AG04450 (cell line): ENCODE measurements at regions of chr9 and their contacts with region 1.

Region 1: DNA sequence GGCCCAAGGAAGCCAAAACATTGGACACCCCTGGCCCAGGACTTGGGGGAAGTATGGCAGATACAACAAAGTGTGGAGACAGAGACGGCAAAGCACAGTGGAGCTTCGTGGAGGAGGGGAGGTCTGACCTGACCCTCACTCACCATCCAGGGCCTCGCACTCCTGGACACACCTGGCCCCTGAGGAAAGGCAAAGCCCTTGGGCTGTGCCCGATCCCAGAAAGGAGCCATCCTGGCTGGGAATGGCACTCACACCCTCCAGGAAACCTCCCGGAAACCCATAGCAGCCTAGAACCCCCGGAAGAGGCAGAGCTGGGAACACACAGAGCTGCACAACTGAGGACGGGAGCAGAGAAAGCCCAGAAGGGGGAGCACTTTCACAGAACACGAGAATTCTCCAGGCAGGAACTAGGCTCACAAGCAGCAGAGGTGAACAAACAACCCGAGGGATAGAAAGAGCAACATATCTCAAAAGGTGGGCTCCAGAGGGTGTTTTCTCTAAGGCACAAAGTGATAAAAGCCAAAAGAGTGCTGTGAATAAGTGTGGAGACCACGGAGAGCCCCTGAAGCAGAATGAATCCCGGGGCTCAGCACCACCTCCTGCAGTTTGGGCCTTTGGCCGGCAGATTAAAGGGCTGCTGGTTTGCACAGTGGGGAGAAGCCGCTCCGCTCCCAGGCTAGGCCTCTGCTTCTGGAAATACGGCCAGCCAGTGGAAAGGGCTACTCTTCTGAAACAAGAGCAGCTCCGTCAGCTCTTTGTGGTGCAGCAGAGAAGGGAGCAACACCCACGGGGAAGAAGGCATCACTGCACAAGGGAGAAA is 108.2 kb downstream of the UBE2R2 start:
- DNase-seq: peak; percentile 16
- H3K4me3 ChIP-seq: no peak overlapping the region
- H3K27ac ChIP-seq: no peak overlapping the region
- H3K27me3 ChIP-seq: no peaks in the 10 kb centered on the region
- CTCF ChIP-seq: peak; percentile 75

Region 2: DNA sequence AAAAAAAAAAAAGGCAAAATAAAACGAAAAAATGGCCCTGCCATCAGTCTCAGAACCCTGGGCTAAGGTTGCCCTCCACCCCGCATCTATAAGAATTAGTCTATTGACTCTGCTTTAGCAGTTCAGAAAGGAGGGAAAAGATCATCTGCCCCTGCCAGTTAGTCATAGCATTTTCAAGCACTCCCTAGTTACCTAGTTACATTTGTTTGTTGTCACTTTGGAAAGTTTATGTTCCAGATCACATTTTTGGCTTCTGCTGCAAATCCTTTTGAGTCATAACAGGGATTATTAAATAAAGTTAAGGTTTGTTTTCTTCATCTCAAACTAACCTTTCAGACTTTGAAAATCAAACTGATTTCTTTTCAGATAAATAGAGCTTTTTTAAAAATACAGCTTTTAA is 574.9 kb before region 1 on chr9:
- CTCF ChIA-PET with region 1: no interaction called
- POLR2A ChIA-PET with region 1: no interaction called
- DNase-seq: peak; percentile 80
- H3K4me3 ChIP-seq: no peak overlapping the region
- H3K27ac ChIP-seq: peak overlapping the region; percentile 84
- H3K27me3 ChIP-seq: no peaks in the 10 kb centered on the region
- CTCF ChIP-seq: no peak

Region 3: GRCh38 chr9:33942471-33943083 is 17.4 kb after region 1 on chr9:
- CTCF ChIA-PET with region 1: interaction called, 19 read pairs
- POLR2A ChIA-PET with region 1: no interaction called
- DNase-seq: peak; percentile 72
- H3K4me3 ChIP-seq: no peak overlapping the region
- H3K27ac ChIP-seq: no peak overlapping the region
- H3K27me3 ChIP-seq: no peaks in the 10 kb centered on the region
- CTCF ChIP-seq: peak; percentile 76

Region 4: DNA sequence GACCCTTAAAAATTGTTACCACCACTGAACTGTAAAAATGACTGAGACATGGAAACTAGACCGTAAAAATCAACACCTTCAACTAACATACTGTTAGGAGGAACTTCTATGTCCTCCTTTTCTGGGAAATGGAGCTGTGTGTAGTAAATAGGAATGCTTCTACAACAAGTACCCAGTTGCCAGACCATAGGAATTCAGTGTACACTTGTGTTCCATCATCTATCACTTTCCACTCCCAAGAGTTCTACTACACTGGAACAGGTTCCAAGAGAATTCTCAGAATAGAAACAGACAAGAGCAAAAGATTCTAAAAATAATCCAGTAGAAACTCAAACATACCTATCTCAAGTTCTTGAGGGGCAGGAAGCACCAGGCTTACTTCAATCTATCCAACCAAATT is 99.9 kb after region 1 on chr9:
- CTCF ChIA-PET with region 1: interaction called, 15 read pairs
- POLR2A ChIA-PET with region 1: no interaction called
- DNase-seq: no peak
- H3K4me3 ChIP-seq: no peak overlapping the region
- H3K27ac ChIP-seq: no peak overlapping the region
- H3K27me3 ChIP-seq: no peaks in the 10 kb centered on the region
- CTCF ChIP-seq: no peak

Region 5: GRCh38 chr9:34035656-34036055 is 110.5 kb after region 1 on chr9:
- CTCF ChIA-PET with region 1: no interaction called
- POLR2A ChIA-PET with region 1: no interaction called
- DNase-seq: no peak
- H3K4me3 ChIP-seq: no peak overlapping the region
- H3K27ac ChIP-seq: no peak overlapping the region
- H3K27me3 ChIP-seq: no peaks in the 10 kb centered on the region
- CTCF ChIP-seq: no peak